Activated T-helper 2 cell treated with anti-CD3 and anti-CD28 coated beads, Interferon-gamma antibody, Interleukin-2, Interleukin-4, amounts not matched to agents 10 μg/mL and 5 μg/mL and 100 μg/mL, durations not matched to agents 14 hours and 24 hours and 36 hours (primary cell): ENCODE measurements at regions of chr10 and their contacts with region 1.

Region 1: GRCh38 chr10:67788025-67788886 is 49.7 kb downstream of the DNAJC12 start:
- DNase-seq: peak; percentile 58
- H3K4me3 Mint-ChIP-seq: no peak overlapping the region
- H3K27ac Mint-ChIP-seq: no peak overlapping the region
- H3K4me1 Mint-ChIP-seq: peaks cover 42% of the 10 kb centered on the region
- H3K27me3 Mint-ChIP-seq: no peaks in the 10 kb centered on the region

Region 2: GRCh38 chr10:67815571-67816059 is 27.4 kb after region 1 on chr10:
- intact Hi-C with region 1: loop called (anchors 1 kb)
- DNase-seq: no peak
- H3K4me3 Mint-ChIP-seq: no peak overlapping the region
- H3K27ac Mint-ChIP-seq: peak overlapping the region; percentile 69
- H3K4me1 Mint-ChIP-seq: peaks cover 11% of the 10 kb centered on the region
- H3K27me3 Mint-ChIP-seq: no peaks in the 10 kb centered on the region

Region 3: GRCh38 chr10:67849331-67850011 is 61.2 kb after region 1 on chr10:
- intact Hi-C with region 1: loop called (anchors 2 kb)
- DNase-seq: peak; percentile 90
- H3K4me3 Mint-ChIP-seq: peak overlapping the region; percentile 92
- H3K27ac Mint-ChIP-seq: peak overlapping the region; percentile 94
- H3K4me1 Mint-ChIP-seq: peaks cover 8% of the 10 kb centered on the region
- H3K27me3 Mint-ChIP-seq: no peaks in the 10 kb centered on the region

Region 4: DNA sequence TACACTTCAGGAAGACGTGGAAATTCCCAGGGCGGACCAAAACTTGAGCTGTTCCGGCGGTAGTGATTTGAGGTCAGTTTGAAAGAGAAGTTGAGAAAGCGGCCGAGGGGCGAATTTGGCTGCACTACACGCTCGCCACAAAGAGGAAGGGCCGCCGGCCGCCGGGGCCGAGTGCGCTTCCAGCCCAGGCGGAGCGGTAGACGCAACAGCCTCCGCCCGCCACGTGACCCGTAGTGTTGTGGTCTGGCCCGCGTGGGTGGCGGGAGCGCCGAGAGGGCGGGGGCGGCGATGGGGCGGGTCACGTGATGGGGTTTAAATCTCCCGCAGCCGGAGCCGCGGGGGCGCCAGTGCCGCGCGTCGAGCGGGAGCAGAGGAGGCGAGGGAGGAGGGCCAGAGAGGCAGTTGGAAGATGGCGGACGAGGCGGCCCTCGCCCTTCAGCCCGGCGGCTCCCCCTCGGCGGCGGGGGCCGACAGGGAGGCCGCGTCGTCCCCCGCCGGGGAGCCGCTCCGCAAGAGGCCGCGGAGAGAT is 96.1 kb after region 1 on chr10 and contains the start of gene SIRT1:
- intact Hi-C with region 1: loop called (anchors 2 kb)
- DNase-seq: peak; percentile 93
- H3K4me3 Mint-ChIP-seq: peak within 1 kb of the TSS; percentile 91
- H3K27ac Mint-ChIP-seq: peak within 1 kb of the TSS; percentile 97
- H3K4me1 Mint-ChIP-seq: peaks cover 19% of the 10 kb centered on the region
- H3K27me3 Mint-ChIP-seq: peaks cover 2% of the 10 kb centered on the region
- total RNA-seq, gene SIRT1: 25.3 and 25.6 TPM in 2 replicates

Region 5: DNA sequence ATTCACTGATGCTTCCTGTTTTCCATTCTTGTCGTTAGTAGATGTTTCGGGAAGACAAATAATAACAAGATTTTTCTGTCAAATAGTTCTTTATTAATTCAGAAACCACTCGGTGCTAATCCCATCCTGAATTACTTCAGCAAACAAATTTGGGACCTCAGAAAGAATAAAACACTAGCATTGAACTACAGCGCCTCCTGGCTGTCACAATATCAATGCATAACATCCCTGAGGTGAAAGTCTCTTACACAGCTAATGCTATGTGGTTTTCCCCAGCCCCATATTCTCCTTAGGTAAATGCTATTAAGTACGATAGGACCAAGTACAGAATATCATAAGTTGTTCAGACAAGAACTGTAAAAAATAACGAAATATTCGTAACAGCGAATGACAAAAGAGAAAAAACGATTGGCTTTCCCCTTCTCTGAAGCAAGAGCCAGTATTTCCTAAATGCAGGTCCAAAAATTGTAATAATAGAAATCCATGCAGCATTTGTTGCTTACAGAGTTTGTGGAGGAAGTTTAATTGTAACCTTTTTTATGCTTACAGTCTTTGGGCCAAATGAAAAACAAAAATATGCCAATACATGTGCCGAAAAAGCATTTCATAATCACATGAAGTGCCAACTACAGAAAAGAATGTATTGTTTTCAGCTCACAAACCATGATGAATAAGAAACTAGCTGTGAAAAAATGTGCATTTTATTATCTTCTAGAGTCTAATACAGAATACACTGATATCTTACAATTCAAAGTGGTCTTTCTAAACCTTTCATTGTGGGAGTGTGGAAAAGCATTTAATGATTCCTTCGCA is 368.3 kb after region 1 on chr10:
- intact Hi-C with region 1: loop called (anchors 1 kb)
- DNase-seq: peak; percentile 29
- H3K4me3 Mint-ChIP-seq: no peak overlapping the region
- H3K27ac Mint-ChIP-seq: no peak overlapping the region
- H3K4me1 Mint-ChIP-seq: peaks cover 8% of the 10 kb centered on the region
- H3K27me3 Mint-ChIP-seq: no peaks in the 10 kb centered on the region

Region 6: DNA sequence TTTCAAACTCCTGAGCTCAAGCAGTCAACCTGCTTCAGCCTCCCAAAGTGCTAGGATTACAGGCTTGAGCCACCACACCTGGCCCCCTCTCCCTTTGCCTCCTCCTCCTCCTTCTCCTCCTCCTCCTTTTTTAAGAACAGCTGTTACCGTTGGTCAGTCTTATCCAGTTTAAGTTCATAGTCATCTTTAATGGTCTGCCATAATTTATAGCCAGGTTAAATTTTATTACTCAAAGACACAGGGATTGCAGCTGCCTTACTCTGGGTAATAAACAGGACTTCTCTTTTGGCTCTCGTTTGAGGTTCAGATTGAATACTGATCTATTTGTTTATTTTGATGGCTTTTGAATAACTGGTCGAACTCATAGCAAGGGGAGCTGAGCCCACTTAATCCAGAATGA is 408.4 kb after region 1 on chr10:
- intact Hi-C with region 1: no loop called
- DNase-seq: no peak
- H3K4me3 Mint-ChIP-seq: no peak overlapping the region
- H3K27ac Mint-ChIP-seq: no peak overlapping the region
- H3K4me1 Mint-ChIP-seq: no peaks in the 10 kb centered on the region
- H3K27me3 Mint-ChIP-seq: peaks cover 34% of the 10 kb centered on the region

Region 7: GRCh38 chr10:68208424-68209042 is 420.3 kb after region 1 on chr10:
- intact Hi-C with region 1: loop called (anchors 5 kb)
- DNase-seq: no peak
- H3K4me3 Mint-ChIP-seq: no peak overlapping the region
- H3K27ac Mint-ChIP-seq: no peak overlapping the region
- H3K4me1 Mint-ChIP-seq: no peaks in the 10 kb centered on the region
- H3K27me3 Mint-ChIP-seq: peaks cover 13% of the 10 kb centered on the region

Region 8: DNA sequence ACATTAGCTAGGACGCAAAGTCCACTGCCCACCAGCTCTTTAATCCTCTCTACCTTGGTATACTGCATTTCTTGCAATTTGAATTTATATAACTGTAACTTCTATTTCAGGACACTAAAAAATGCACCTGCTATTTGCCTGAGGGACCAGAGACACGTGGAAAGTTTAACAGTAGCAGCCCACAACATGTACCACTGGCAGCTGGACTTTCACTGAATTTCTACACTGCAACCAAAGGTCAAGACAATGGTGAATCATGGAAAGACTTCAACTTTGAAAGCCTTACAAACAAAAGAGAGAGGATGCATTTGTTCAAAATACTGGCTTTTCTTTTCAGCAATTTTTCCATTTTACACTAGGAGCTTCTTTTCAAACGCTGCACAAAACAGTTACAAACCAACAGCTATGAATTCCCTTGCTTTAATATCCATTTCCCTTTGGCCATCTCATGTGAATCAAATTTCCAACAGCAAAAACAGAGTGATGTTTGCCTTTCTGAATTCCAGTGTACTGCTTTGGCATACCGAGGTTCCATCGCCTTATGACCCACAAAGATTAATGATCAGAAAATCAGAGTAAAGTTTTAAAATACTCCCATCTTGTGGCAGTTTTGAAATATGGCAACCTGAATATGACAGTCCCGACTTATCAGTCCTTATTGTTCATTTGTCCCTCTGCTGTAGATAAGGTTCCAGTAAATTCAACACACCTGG is 513.7 kb after region 1 on chr10:
- intact Hi-C with region 1: loop called (anchors 2 kb)
- DNase-seq: no peak
- H3K4me3 Mint-ChIP-seq: no peak overlapping the region
- H3K27ac Mint-ChIP-seq: no peak overlapping the region
- H3K4me1 Mint-ChIP-seq: peaks cover 3% of the 10 kb centered on the region
- H3K27me3 Mint-ChIP-seq: no peaks in the 10 kb centered on the region